ENCODE measurements at regions of chr2 and their contacts with region 1.

Region 1: GRCh38 chr2:190512539-190513095 is 21.9 kb downstream of the NEMP2 start:
- DNase-seq: no peak
- ATAC-seq: no peak
- H3K4me3 ChIP-seq: no peak overlapping the region
- H3K27ac ChIP-seq: no peak overlapping the region
- H3K4me1 ChIP-seq: no peaks in the 10 kb centered on the region
- H3K27me3 ChIP-seq: no peaks in the 10 kb centered on the region
- CTCF ChIP-seq: no peak
- POLR2A ChIP-seq: no peak

Region 2: DNA sequence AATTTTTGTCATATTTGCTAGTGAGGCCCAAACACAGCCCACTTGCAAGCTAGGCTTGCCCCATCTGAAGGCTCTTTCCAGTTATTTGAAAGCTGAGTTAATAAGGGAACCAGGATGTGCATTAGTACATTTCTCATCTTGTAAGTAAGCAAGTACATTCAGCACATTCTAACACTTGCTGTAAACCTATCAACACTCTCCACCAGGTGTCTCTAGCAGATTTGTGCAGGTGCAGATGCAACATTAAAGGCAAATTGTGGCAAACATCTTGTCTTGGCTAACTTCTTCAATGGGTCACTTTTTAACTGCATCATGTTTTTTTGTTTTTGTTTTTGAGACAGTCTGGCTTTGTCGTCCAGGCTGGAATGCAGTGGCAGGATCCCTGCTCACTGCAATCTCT is 129.8 kb before region 1 on chr2:
- in situ Hi-C with region 1: no loop called
- intact Hi-C with region 1: loop called (anchors 2 kb)
- DNase-seq: no peak
- ATAC-seq: no peak
- H3K4me3 ChIP-seq: no peak overlapping the region
- H3K27ac ChIP-seq: no peak overlapping the region
- H3K4me1 ChIP-seq: no peaks in the 10 kb centered on the region
- H3K27me3 ChIP-seq: no peaks in the 10 kb centered on the region
- CTCF ChIP-seq: peak in 3 of 5 experiments; percentile 12 to 45 (median 36)
- POLR2A ChIP-seq: no peak